Activated naive CD4-positive, alpha-beta T cell treated with anti-CD3 and anti-CD28 coated beads for 36 hours (primary cell): ENCODE measurements at regions of chr1 and their contacts with region 1.

Region 1: GRCh38 chr1:44739361-44740178 is at the start of gene KIF2C:
- DNase-seq: peak; percentile 99
- H3K4me3 Mint-ChIP-seq: peak within 1 kb of the TSS; percentile 99
- H3K27ac Mint-ChIP-seq: peak within 1 kb of the TSS; percentile 97
- H3K4me1 Mint-ChIP-seq: peaks cover 16% of the 10 kb centered on the region
- H3K27me3 Mint-ChIP-seq: no peaks in the 10 kb centered on the region
- total RNA-seq, gene KIF2C: 147 to 154 TPM

Region 2: GRCh38 chr1:44674113-44675000 is 65.2 kb before region 1 on chr1 and contains the starts of genes ARMH1 and TMEM53:
- CTCF ChIA-PET with region 1: no interaction called
- intact Hi-C with region 1: loop called (anchors 2 kb)
- DNase-seq: peak; percentile 99
- H3K4me3 Mint-ChIP-seq: peak within 1 kb of the TSS; percentile 82
- H3K27ac Mint-ChIP-seq: peak within 1 kb of the TSS; percentile 78
- H3K4me1 Mint-ChIP-seq: peaks cover 18% of the 10 kb centered on the region
- H3K27me3 Mint-ChIP-seq: no peaks in the 10 kb centered on the region
- total RNA-seq, gene ARMH1: 143 to 155 TPM
- total RNA-seq, gene TMEM53: 4.5 to 4.9 TPM

Region 3: GRCh38 chr1:44721485-44722361 is 17.8 kb before region 1 on chr1:
- CTCF ChIA-PET with region 1: interaction called, 3 read pairs
- intact Hi-C with region 1: loop called (anchors 1 kb)
- DNase-seq: peak; percentile 90
- H3K4me3 Mint-ChIP-seq: peak overlapping the region; percentile 66
- H3K27ac Mint-ChIP-seq: peak overlapping the region; percentile 98
- H3K4me1 Mint-ChIP-seq: peaks cover 83% of the 10 kb centered on the region
- H3K27me3 Mint-ChIP-seq: no peaks in the 10 kb centered on the region

Region 4: GRCh38 chr1:44775078-44775929 is 35.7 kb after region 1 on chr1 and contains the start of gene RPS8:
- CTCF ChIA-PET with region 1: interaction called, 3 read pairs
- intact Hi-C with region 1: loop called (anchors 1 kb)
- DNase-seq: peak; percentile 94
- H3K4me3 Mint-ChIP-seq: peak within 1 kb of the TSS; percentile 95
- H3K27ac Mint-ChIP-seq: peak within 1 kb of the TSS; percentile 92
- H3K4me1 Mint-ChIP-seq: peaks cover 32% of the 10 kb centered on the region
- H3K27me3 Mint-ChIP-seq: no peaks in the 10 kb centered on the region
- total RNA-seq, gene RPS8: 3,619 to 3,772 TPM

Region 5: DNA sequence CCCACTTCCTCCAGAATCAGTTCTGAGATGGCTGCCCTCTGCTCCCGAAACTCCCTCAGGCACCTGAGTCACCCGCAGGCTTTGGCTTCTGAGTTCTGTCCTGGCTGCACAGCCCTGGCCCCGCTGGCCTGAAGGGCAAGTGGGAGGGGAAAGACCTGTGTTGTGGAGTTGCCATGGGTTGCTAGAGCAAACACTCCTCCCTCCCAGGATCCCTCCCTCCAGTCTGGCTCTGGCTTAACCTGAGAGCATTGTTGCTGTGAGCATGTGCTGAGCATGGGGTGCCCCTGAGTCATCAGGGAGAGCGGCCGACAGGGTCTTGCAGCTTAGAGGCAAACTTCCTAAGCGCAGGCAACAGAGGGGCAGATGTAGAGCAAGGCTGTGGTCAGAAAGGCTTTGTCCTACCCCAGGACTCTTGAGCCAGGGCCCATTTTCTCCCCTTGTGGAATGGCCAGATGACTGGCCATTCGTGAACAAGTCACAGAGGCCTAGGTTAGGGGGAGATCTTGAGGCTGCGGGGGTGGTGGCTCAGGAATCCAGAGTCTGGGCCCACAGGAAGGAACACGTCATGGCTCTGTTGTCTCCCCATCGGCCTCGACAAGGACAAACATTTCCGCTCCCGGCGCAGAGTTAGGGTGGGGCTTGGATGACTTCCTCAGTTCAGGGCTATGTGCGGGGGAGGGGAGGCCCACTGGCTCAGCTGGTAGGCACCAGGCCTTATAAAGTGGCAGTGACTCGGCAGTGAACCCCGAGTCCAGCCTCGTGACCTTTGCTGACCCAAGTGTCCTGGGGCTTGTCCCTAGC is 67.9 kb after region 1 on chr1 and contains the start of gene DYNLT4:
- CTCF ChIA-PET with region 1: no interaction called
- intact Hi-C with region 1: loop called (anchors 1 kb)
- DNase-seq: peak; percentile 97
- H3K4me3 Mint-ChIP-seq: peak within 1 kb of the TSS; percentile 76
- H3K27ac Mint-ChIP-seq: peak within 1 kb of the TSS; percentile 100
- H3K4me1 Mint-ChIP-seq: peaks cover 93% of the 10 kb centered on the region
- H3K27me3 Mint-ChIP-seq: no peaks in the 10 kb centered on the region
- total RNA-seq, gene DYNLT4: 0.62 to 0.67 TPM

Region 6: GRCh38 chr1:44985747-44986359 is 246.3 kb after region 1 on chr1:
- CTCF ChIA-PET with region 1: no interaction called
- intact Hi-C with region 1: loop called (anchors 1 kb)
- DNase-seq: no peak
- H3K4me3 Mint-ChIP-seq: peak overlapping the region; percentile 100
- H3K27ac Mint-ChIP-seq: peak overlapping the region; percentile 80
- H3K4me1 Mint-ChIP-seq: peaks cover 23% of the 10 kb centered on the region
- H3K27me3 Mint-ChIP-seq: no peaks in the 10 kb centered on the region